Endothelial cell of umbilical vein (primary cell): ENCODE measurements at regions of chr3 and their contacts with region 1.

Region 1: GRCh38 chr3:52498137-52499054 is 3.3 kb downstream of the STAB1 start:
- DNase-seq: no peak
- H3K4me3 ChIP-seq: no peak overlapping the region
- H3K27ac ChIP-seq: no peak overlapping the region
- H3K4me1 ChIP-seq: peaks cover 39% of the 10 kb centered on the region
- H3K27me3 ChIP-seq: no peaks in the 10 kb centered on the region
- CTCF ChIP-seq: no peak
- POLR2A ChIP-seq: no peak

Region 2: GRCh38 chr3:52428151-52429005 is 70.0 kb before region 1 on chr3:
- CTCF ChIA-PET with region 1: no interaction called
- POLR2A ChIA-PET with region 1: no interaction called
- dilution Hi-C with region 1: no loop called
- intact Hi-C with region 1: loop called (anchors 1 kb)
- DNase-seq: peak; percentile 85
- H3K4me3 ChIP-seq: no peak overlapping the region
- H3K27ac ChIP-seq: peak overlapping the region; percentile 96
- H3K4me1 ChIP-seq: peaks cover 25% of the 10 kb centered on the region
- H3K27me3 ChIP-seq: no peaks in the 10 kb centered on the region
- CTCF ChIP-seq: peak; percentile 70 to 79
- POLR2A ChIP-seq: no peak

Region 3: DNA sequence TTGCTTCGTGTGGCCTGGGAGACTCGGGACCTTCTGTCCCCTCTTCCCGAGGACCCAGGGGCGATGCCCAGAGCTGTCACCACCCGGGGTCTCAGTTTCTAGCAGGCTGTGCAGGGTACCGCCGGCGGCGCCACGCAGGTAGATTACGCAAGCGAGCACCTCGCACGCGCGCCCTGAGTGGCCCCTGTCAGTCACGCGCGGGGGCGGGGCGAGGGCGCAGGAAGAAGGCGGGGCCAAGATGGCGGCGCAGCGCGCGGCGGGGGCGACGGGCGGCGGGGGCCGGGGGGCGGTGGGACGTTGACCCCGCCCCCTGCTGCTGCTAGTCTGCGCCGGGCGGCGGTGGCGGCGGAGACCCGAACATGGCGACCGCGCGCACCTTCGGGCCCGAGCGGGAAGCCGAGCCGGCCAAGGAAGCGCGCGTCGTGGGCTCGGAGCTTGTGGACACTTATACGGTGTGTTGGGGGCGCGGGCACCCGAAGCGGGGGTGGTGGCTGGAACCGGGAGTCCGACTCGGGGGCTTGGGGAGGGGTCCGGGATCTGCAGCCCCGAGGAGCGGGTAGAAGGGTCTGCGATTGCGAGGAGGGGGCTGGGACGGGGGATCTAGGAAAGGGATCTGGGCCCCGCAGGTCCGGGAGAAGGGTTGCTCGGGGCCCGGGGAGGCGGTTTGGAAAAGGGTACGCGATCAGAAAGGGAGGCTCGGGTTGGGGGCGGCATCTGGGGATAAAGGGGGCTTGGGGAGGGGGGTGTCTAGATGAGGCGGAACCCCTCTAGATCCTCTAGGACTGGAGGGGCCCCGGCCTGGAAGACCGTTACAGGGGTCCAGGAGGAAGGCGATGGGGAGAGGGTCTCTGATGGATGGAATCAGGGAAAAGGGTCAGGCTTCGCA is 42.9 kb before region 1 on chr3 and contains the start of gene NISCH:
- CTCF ChIA-PET with region 1: no interaction called
- POLR2A ChIA-PET with region 1: no interaction called
- dilution Hi-C with region 1: no loop called
- intact Hi-C with region 1: loop called (anchors 5 kb)
- DNase-seq: peak; percentile 78
- H3K4me3 ChIP-seq: peak within 1 kb of the TSS; percentile 80 to 97 (median 97)
- H3K27ac ChIP-seq: peak within 1 kb of the TSS; percentile 69
- H3K4me1 ChIP-seq: peaks cover 17% of the 10 kb centered on the region
- H3K27me3 ChIP-seq: no peaks in the 10 kb centered on the region
- CTCF ChIP-seq: no peak
- POLR2A ChIP-seq: no peak
- total RNA-seq, gene NISCH: 153 and 156 TPM in 2 replicates

Region 4: DNA sequence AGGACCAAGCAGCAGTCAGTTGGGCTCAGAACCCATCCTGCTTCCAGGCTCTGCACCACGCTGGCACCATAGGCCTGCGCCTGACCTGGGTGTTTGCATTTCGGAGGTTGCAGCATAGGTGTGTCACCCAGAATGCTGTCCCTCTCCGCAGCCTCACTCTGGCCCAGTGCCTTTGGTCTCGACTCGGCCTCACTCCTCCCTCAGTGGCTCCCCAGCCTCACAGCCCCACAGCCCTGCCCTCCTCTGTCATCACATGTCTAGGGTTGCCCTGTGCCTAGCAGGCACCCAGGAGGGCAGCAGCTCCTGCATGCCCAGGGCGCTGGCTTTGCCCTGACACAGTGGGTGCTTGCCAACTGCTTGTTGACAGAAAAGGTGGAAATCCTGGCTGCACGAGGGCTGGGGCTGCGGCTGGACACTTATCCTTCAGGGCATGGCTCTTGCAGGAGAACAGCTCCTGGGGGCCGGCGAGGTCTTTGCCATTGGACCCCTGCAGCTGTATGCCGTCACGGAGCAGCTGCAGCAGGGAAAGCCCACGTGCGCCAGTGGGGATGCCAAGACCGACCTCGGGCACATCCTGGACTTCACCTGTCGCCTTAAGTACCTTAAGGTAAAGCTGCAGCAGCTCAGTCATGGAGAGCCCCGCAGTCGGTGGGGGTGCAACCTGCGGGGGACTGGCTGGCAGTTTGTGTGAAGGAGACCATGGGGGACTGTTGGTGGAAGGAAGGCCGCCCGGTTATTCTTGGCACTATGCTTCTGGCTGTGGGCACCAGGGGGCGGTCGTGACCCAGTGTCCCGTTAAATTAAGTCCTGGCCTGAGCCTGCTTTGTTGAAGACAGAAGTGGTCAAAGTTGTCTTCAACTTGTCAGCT is 26.8 kb before region 1 on chr3:
- CTCF ChIA-PET with region 1: interaction called, 14 read pairs
- POLR2A ChIA-PET with region 1: no interaction called
- dilution Hi-C with region 1: no loop called
- intact Hi-C with region 1: loop called (anchors 1 kb)
- DNase-seq: peak; percentile 74
- H3K4me3 ChIP-seq: no peak overlapping the region
- H3K27ac ChIP-seq: no peak overlapping the region
- H3K4me1 ChIP-seq: no peaks in the 10 kb centered on the region
- H3K27me3 ChIP-seq: no peaks in the 10 kb centered on the region
- CTCF ChIP-seq: peak; percentile 75 to 86
- POLR2A ChIP-seq: no peak

Region 5: GRCh38 chr3:52536369-52537164 is 38.2 kb after region 1 on chr3 and contains the start of gene UQCC5:
- CTCF ChIA-PET with region 1: interaction called, 5 read pairs
- POLR2A ChIA-PET with region 1: interaction called, 7 read pairs
- dilution Hi-C with region 1: no loop called
- intact Hi-C with region 1: loop called (anchors 1 kb)
- DNase-seq: peak; percentile 100
- H3K4me3 ChIP-seq: peak within 1 kb of the TSS; percentile 37 to 74 (median 48)
- H3K27ac ChIP-seq: peak within 1 kb of the TSS; percentile 57
- H3K4me1 ChIP-seq: peaks cover 45% of the 10 kb centered on the region
- H3K27me3 ChIP-seq: no peaks in the 10 kb centered on the region
- CTCF ChIP-seq: peak in 1 of 2 donors; percentile 4
- POLR2A ChIP-seq: peak; percentile 99
- total RNA-seq, gene UQCC5: 22.6 and 34.6 TPM in 2 replicates